Panc1 (cell line): ENCODE measurements at regions of chr1 and their contacts with region 1.

Region 1: DNA sequence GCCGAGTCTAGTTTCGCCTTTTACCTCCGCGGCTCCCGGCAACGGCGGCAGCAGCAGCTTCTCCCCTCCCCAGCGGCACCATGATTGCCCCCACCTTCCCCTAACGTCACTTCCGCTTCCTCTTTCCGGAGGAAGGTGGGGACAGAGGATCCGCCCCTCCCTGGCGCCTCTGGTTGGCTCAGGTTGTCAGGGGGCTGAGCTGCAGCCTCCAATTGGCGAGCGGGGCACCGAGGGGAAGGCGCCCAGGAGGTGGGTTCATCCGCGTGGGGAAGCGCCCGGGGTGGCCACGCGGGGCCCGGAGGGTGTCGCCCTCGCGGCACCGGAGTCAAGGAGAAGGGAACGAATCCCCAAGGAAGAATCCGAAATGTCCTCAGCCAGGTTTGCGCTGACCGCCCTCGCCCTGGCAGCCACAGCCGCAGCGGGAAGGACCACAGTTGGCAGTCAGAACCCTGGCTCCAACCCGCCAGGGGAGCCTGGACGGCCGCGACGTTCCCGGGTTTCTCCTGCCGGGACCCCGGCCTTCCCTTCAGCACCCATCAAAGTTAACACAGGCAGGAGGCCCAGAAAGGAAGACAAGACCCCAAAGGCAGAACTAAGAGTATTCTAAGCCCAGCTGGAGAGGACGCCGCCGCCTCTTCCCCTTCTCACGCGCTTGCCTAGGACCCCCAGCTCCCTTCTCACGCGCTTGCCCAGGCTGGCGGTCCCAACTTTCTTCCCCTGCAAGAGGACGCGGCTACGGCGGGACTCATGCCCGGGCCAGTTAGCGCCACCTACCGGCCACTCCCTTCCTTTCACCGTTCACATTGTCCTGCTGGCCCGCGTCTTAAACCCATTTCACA is at the start of gene MTF1:
- DNase-seq: peak; percentile 89
- ATAC-seq: peak; percentile 99
- H3K4me3 ChIP-seq: peak within 1 kb of the TSS; percentile 83 to 85
- H3K27ac ChIP-seq: peak within 1 kb of the TSS; percentile 91
- H3K4me1 ChIP-seq: peaks cover 17% of the 10 kb centered on the region
- H3K27me3 ChIP-seq: no peaks in the 10 kb centered on the region
- CTCF ChIP-seq: peak; percentile 98
- total RNA-seq, gene MTF1: 26.2 TPM

Region 2: GRCh38 chr1:37807555-37808368 is 52.0 kb before region 1 on chr1 and contains the starts of genes C1orf122 and YRDC:
- CTCF ChIA-PET with region 1: no interaction called
- POLR2A ChIA-PET with region 1: interaction called, 12 read pairs
- in situ Hi-C with region 1: no loop called
- intact Hi-C with region 1: loop called (anchors 1 kb)
- DNase-seq: peak; percentile 33
- ATAC-seq: peak; percentile 94
- H3K4me3 ChIP-seq: peak within 1 kb of the TSS; percentile 94 to 98
- H3K27ac ChIP-seq: peak within 1 kb of the TSS; percentile 94
- H3K4me1 ChIP-seq: peaks cover 32% of the 10 kb centered on the region
- H3K27me3 ChIP-seq: no peaks in the 10 kb centered on the region
- CTCF ChIP-seq: no peak
- total RNA-seq, gene C1orf122: 77.2 TPM
- total RNA-seq, gene YRDC: 24.0 TPM

Region 3: GRCh38 chr1:37831109-37831508 is 28.6 kb before region 1 on chr1:
- CTCF ChIA-PET with region 1: no interaction called
- POLR2A ChIA-PET with region 1: interaction called, 13 read pairs
- in situ Hi-C with region 1: no loop called
- intact Hi-C with region 1: no loop called
- DNase-seq: no peak
- ATAC-seq: no peak
- H3K4me3 ChIP-seq: no peak overlapping the region
- H3K27ac ChIP-seq: no peak overlapping the region
- H3K4me1 ChIP-seq: no peaks in the 10 kb centered on the region
- H3K27me3 ChIP-seq: no peaks in the 10 kb centered on the region
- CTCF ChIP-seq: no peak

Region 4: GRCh38 chr1:37836788-37837187 is 22.9 kb before region 1 on chr1:
- CTCF ChIA-PET with region 1: no interaction called
- POLR2A ChIA-PET with region 1: interaction called, 10 read pairs
- in situ Hi-C with region 1: no loop called
- intact Hi-C with region 1: no loop called
- DNase-seq: no peak
- ATAC-seq: no peak
- H3K4me3 ChIP-seq: no peak overlapping the region
- H3K27ac ChIP-seq: no peak overlapping the region
- H3K4me1 ChIP-seq: no peaks in the 10 kb centered on the region
- H3K27me3 ChIP-seq: no peaks in the 10 kb centered on the region
- CTCF ChIP-seq: no peak

Region 5: DNA sequence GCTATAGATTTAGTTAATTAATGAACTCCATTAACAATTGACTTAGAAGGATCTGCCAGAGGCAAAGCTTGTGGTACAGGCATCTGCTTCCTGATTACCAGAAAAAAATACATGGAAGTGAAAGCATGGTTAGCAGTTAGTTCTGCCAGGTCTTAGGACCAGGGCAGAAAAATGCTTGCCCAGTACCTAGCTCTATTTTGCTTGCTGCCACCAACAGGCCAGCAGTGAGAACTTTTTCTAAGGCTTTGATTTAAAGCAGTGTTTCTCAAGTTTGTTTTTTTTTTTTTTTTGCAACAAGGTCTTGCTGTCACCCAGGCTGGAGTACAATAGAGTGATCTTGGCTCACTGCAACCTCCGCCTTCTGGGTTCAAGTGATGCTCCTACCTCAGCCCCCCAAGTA is 16.1 kb after region 1 on chr1:
- CTCF ChIA-PET with region 1: interaction called, 13 read pairs
- POLR2A ChIA-PET with region 1: no interaction called
- in situ Hi-C with region 1: no loop called
- intact Hi-C with region 1: no loop called
- DNase-seq: no peak
- ATAC-seq: no peak; the same call in 1 of the 2 replicates
- H3K4me3 ChIP-seq: no peak overlapping the region
- H3K27ac ChIP-seq: no peak overlapping the region
- H3K4me1 ChIP-seq: no peaks in the 10 kb centered on the region
- H3K27me3 ChIP-seq: no peaks in the 10 kb centered on the region
- CTCF ChIP-seq: no peak; the same call in 1 of the 2 replicates

Region 6: DNA sequence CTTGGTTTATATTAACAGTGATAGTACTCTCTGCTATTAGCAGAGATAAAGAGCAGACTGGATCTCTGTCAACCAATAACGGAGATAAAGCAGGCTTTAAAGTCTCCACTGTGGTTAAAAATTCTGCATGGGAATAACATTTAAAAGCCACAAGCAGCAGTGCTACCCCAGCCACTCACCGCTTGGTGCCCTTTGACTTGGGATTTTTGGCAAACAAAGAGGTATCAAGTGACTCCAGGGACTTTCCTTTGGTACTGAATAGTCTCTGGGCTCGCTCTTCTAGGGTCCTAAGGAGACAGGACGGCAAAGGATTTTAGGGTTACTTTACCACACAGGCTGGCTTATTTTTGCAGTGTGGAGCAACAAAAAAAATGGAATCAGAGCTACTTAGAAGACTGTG is 118.8 kb after region 1 on chr1:
- CTCF ChIA-PET with region 1: interaction called, 12 read pairs
- POLR2A ChIA-PET with region 1: no interaction called
- in situ Hi-C with region 1: no loop called
- intact Hi-C with region 1: no loop called
- DNase-seq: no peak
- ATAC-seq: no peak
- H3K4me3 ChIP-seq: no peak overlapping the region
- H3K27ac ChIP-seq: no peak overlapping the region
- H3K4me1 ChIP-seq: no peaks in the 10 kb centered on the region
- H3K27me3 ChIP-seq: no peaks in the 10 kb centered on the region
- CTCF ChIP-seq: no peak

Region 7: GRCh38 chr1:38326135-38326534 is 466.4 kb after region 1 on chr1:
- CTCF ChIA-PET with region 1: no interaction called
- POLR2A ChIA-PET with region 1: no interaction called
- in situ Hi-C with region 1: no loop called
- intact Hi-C with region 1: no loop called
- DNase-seq: no peak
- ATAC-seq: no peak
- H3K4me3 ChIP-seq: no peak overlapping the region
- H3K27ac ChIP-seq: no peak overlapping the region
- H3K4me1 ChIP-seq: no peaks in the 10 kb centered on the region
- H3K27me3 ChIP-seq: peaks cover 16% of the 10 kb centered on the region
- CTCF ChIP-seq: no peak